ENCODE measurements at regions of chr1 and their contacts with region 1.

Region 1: DNA sequence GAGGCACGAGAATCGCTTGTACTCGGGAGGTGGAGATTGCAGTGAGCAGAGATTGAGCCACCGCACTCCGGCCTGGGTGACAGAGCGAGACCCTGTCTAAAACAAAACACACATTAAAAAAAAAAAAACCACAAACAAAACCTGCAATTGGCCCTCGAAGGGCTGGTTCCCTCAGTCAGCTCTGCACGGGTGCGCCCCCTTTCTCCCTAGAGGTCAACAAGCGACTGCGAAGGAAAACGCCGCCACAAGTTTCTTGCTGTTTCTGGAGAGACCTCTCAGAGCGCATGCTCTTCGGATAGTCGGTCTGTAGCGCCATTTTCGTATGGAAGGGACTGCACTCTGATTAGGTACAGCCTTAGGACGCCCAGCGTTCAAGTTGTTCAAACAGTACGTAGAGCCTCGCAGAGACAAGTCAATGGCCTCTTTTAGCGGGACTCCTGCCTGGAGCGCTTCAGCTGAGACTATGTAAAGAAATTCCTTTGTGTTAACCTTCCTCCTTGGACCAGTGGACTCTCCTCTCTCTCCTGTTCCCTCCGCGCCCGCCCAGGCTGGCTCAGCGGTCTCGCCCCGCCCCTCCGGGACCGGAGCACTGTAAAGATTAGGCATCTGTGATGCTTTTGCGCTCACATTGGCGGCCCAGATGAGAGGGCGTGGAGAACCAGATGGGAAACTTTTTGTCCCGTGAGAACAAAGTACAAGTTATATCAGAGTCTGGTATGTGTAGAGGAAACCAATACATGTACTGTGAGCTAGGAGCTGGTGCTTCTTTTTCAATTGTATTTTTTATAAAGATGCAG is 1.0 kb upstream of the CDC14A start:
- DNase-seq: peak; percentile 96
- H3K4me3 Mint-ChIP-seq: peak overlapping the region; percentile 96
- H3K27ac Mint-ChIP-seq: peak overlapping the region; percentile 98
- H3K4me1 Mint-ChIP-seq: peaks cover 42% of the 10 kb centered on the region
- H3K27me3 Mint-ChIP-seq: no peaks in the 10 kb centered on the region

Region 2: DNA sequence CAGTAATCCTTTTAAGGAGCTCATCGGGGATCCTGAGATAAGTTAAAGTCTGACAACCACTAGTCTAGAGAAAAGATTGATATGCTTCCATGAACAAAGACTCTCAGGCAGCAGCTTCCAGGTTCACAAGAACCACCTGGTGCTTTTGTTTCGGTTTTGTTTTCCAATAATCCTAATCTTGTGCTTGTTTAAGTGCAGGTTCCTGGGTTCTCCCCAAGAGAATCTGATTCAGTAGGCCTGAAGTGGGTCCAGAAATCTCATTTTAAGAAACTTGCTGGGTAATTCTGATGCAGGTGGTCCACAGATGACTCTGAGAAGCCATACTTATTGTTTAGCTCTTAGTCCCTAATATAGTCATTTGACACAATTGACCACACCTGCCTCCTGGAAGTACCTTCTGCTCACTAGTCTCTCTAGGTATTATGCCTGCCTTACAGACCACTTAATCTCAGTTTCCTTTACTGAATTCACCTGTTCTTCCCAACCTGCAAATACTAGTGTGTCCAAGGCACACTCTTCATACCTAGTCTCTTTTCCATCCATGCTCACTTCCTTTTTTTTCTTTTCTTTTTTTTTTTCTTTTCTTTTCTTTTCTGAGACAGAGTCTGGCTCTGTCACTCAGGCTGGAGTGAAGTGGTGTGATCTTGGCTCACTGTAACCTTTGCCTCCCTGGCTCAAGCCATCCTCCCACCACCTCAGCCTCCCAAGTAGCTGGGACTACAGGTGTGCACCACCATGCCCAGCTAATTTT is 564.4 kb before region 1 on chr1:
- intact Hi-C with region 1: no loop called
- DNase-seq: peak; percentile 60
- H3K4me3 Mint-ChIP-seq: no peak overlapping the region
- H3K27ac Mint-ChIP-seq: no peak overlapping the region
- H3K4me1 Mint-ChIP-seq: peaks cover 19% of the 10 kb centered on the region
- H3K27me3 Mint-ChIP-seq: peaks cover 54% of the 10 kb centered on the region

Region 3: DNA sequence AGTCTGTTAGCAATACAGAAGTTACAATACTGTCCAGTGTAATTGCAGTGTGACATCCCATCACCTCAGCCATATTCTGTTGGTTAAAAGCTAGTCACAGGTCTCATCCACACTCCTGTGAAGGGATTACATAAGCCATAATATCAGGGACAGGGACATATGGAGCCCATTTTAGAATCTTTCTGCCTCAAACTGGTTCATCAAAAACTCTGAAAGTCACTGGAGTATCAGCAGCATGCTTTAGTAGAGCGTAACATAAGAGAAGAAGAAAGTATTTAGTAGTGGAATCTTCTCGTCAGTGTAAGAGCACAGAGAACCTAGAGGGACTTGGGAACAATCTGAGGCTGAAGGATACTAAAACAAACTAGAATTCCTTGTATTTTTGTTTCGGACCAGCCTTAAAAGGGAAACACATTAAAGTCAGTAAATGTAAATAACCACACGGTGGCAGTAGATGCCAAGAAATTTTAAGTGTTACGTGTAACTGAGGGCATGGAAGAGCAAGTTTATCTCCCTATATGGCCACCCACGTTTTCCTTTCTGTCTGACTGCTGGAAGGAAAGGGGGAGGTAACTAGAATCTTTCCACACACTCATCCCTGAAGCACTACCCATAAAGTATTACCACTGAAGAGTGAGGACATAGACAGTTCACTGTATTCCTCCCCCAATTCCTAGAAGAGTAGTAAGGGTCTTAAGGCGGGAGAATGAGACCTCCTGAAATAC is 542.7 kb before region 1 on chr1:
- intact Hi-C with region 1: loop called (anchors 2 kb)
- DNase-seq: peak; percentile 85
- H3K4me3 Mint-ChIP-seq: peak overlapping the region; percentile 22
- H3K27ac Mint-ChIP-seq: no peak overlapping the region
- H3K4me1 Mint-ChIP-seq: peaks cover 18% of the 10 kb centered on the region
- H3K27me3 Mint-ChIP-seq: peaks cover 20% of the 10 kb centered on the region

Region 4: GRCh38 chr1:99872063-99872462 is 479.2 kb before region 1 on chr1:
- intact Hi-C with region 1: no loop called
- DNase-seq: no peak
- H3K4me3 Mint-ChIP-seq: no peak overlapping the region
- H3K27ac Mint-ChIP-seq: no peak overlapping the region
- H3K4me1 Mint-ChIP-seq: no peaks in the 10 kb centered on the region
- H3K27me3 Mint-ChIP-seq: no peaks in the 10 kb centered on the region

Region 5: GRCh38 chr1:100249537-100250257 is 101.6 kb before region 1 on chr1 and contains the start of gene DBT:
- intact Hi-C with region 1: loop called (anchors 5 kb)
- DNase-seq: peak; percentile 98
- H3K4me3 Mint-ChIP-seq: no peak within 1 kb of the TSS
- H3K27ac Mint-ChIP-seq: no peak within 1 kb of the TSS
- H3K4me1 Mint-ChIP-seq: peaks cover 11% of the 10 kb centered on the region
- H3K27me3 Mint-ChIP-seq: peaks cover 8% of the 10 kb centered on the region
- total RNA-seq, gene DBT: 11.9 and 12.4 TPM in 2 replicates

Region 6: GRCh38 chr1:100377590-100378361 is 26.5 kb after region 1 on chr1:
- intact Hi-C with region 1: loop called (anchors 1 kb)
- DNase-seq: no peak
- H3K4me3 Mint-ChIP-seq: peak overlapping the region; percentile 61
- H3K27ac Mint-ChIP-seq: peak overlapping the region; percentile 88
- H3K4me1 Mint-ChIP-seq: peaks cover 36% of the 10 kb centered on the region
- H3K27me3 Mint-ChIP-seq: no peaks in the 10 kb centered on the region

Region 7: GRCh38 chr1:100443811-100444571 is 92.7 kb after region 1 on chr1:
- intact Hi-C with region 1: loop called (anchors 1 kb)
- DNase-seq: peak; percentile 82
- H3K4me3 Mint-ChIP-seq: peak overlapping the region; percentile 86
- H3K27ac Mint-ChIP-seq: peak overlapping the region; percentile 96
- H3K4me1 Mint-ChIP-seq: peaks cover 72% of the 10 kb centered on the region
- H3K27me3 Mint-ChIP-seq: no peaks in the 10 kb centered on the region

Region 8: DNA sequence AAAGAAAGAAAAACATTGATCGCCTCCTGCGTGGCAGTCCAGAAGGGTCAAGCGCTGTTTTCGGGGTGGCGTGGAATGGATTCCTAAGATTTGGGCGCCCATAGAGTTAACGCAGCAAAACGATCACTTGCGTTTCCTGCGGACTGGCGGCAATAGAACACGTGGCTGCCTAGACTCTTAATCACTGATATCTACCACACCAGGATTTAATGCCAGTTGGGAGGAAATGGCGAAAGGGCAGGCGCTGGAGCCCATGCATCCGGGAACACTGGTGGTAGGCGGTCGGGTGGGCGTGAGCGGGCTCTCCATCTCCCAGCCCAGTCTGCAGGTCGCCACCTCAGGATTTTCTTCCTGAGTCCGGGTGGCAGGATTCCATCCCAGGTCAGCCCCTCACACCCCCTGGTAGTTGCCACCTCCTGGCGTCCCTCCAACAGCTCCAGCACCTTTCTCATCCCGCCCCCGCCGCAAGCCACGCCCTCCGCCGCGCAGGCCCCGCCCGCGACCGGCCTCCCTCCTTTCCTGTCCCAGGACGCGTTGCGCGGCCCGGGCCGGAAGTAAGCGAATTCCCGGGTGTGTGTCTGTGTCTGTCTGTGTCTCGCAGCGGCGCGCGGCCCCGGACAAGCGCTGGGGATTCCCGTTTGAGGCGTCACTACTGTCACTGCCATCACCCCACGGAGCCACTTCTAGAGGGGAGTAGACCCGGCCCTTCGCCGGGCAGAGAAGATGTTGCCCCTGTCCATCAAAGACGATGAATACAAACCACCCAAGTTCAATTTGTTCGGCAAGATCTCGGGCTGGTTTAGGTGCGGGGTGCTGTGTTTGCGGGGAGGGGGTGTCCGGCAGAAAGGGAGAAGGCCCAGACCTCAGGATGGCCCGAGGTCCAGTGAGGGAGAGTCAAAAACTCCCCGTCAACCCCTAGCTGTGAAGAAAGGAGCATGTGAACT is 544.5 kb after region 1 on chr1 and contains the start of gene SLC30A7:
- intact Hi-C with region 1: loop called (anchors 2 kb)
- DNase-seq: peak; percentile 99
- H3K4me3 Mint-ChIP-seq: peak within 1 kb of the TSS; percentile 100
- H3K27ac Mint-ChIP-seq: peak within 1 kb of the TSS; percentile 100
- H3K4me1 Mint-ChIP-seq: peaks cover 36% of the 10 kb centered on the region
- H3K27me3 Mint-ChIP-seq: no peaks in the 10 kb centered on the region
- total RNA-seq, gene SLC30A7: 40.8 and 41.0 TPM in 2 replicates